Endothelial cell of umbilical vein (primary cell): ENCODE measurements at regions of chr3 and their contacts with region 1.

Region 1: GRCh38 chr3:79521238-79521848 is 246.5 kb downstream of the ROBO1 start:
- DNase-seq: peak; percentile 79
- H3K4me3 ChIP-seq: no peak overlapping the region
- H3K27ac ChIP-seq: no peak overlapping the region
- H3K4me1 ChIP-seq: peaks cover 6% of the 10 kb centered on the region
- H3K27me3 ChIP-seq: no peaks in the 10 kb centered on the region
- CTCF ChIP-seq: peak; percentile 17 to 30
- POLR2A ChIP-seq: no peak

Region 2: GRCh38 chr3:79598594-79598993 is 77.3 kb after region 1 on chr3:
- CTCF ChIA-PET with region 1: no interaction called
- POLR2A ChIA-PET with region 1: no interaction called
- dilution Hi-C with region 1: no loop called
- intact Hi-C with region 1: no loop called
- DNase-seq: peak; percentile 37
- H3K4me3 ChIP-seq: no peak overlapping the region
- H3K27ac ChIP-seq: no peak overlapping the region
- H3K4me1 ChIP-seq: no peaks in the 10 kb centered on the region
- H3K27me3 ChIP-seq: no peaks in the 10 kb centered on the region
- CTCF ChIP-seq: no peak
- POLR2A ChIP-seq: no peak

Region 3: DNA sequence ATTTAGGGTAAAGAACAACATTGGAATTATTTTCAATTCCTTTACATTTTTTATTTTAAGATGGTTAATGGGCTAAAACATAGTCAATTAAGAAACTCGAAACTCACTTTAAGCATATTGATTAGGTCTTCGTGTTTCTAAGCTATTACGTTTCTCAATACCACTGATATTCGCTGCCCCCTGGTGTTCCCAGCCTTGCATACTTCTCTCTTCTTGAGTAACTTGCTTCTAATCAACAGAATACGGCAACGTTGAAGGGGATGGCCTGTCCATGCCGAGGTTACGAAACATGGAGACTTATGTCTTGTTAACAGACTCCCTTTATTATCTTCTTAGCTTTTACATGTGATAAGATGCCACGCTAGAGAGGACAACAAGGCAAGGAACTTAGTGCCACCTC is 202.9 kb after region 1 on chr3:
- CTCF ChIA-PET with region 1: no interaction called
- POLR2A ChIA-PET with region 1: no interaction called
- dilution Hi-C with region 1: no loop called
- intact Hi-C with region 1: loop called (anchors 5 kb)
- DNase-seq: no peak
- H3K4me3 ChIP-seq: no peak overlapping the region
- H3K27ac ChIP-seq: no peak overlapping the region
- H3K4me1 ChIP-seq: no peaks in the 10 kb centered on the region
- H3K27me3 ChIP-seq: no peaks in the 10 kb centered on the region
- CTCF ChIP-seq: no peak
- POLR2A ChIP-seq: no peak

Region 4: DNA sequence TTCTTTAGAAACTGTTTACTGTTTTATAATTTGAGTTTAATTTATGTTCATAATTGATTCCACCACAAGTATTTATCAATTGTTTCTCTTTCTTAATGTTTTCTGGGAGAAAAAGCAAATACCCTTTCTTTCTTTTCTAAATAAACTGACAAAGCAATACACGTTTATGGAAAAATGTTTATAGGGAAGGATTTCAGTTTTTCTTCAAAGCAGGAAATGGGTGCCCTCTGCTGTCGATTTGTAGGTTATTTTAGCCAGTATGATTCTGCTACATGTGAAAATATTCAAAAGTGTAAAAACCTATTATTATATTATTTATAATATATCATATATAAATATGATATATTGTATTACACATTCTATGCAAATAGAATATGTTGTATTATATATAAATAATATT is 1167.5 kb after region 1 on chr3:
- CTCF ChIA-PET with region 1: interaction called, 80 read pairs
- POLR2A ChIA-PET with region 1: no interaction called
- dilution Hi-C with region 1: no loop called
- intact Hi-C with region 1: loop called (anchors 1 kb)
- DNase-seq: peak; percentile 65
- H3K4me3 ChIP-seq: no peak overlapping the region
- H3K27ac ChIP-seq: no peak overlapping the region
- H3K4me1 ChIP-seq: no peaks in the 10 kb centered on the region
- H3K27me3 ChIP-seq: no peaks in the 10 kb centered on the region
- CTCF ChIP-seq: peak; percentile 8 to 30
- POLR2A ChIP-seq: no peak

Region 5: DNA sequence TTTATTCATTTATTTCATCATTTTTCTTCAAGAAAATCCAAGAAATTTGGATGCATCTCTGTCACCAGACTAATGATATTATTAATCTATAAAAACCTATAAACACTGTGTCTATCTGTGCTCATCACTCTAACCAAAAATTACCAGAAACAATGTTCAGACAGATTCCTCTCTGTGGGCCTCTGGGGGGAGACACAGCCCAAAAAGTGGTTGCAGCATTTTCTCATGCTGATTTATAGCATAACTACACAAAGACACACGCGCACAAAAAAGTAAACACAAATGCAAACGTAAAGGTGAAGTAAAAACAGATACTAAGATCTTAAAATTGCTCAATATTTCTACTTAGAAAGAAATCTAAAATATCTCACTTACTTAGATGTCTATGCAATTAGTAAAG is 1264.1 kb after region 1 on chr3:
- CTCF ChIA-PET with region 1: interaction called, 4 read pairs
- POLR2A ChIA-PET with region 1: no interaction called
- dilution Hi-C with region 1: no loop called
- intact Hi-C with region 1: loop called (anchors 5 kb)
- DNase-seq: peak; percentile 57
- H3K4me3 ChIP-seq: no peak overlapping the region
- H3K27ac ChIP-seq: no peak overlapping the region
- H3K4me1 ChIP-seq: no peaks in the 10 kb centered on the region
- H3K27me3 ChIP-seq: no peaks in the 10 kb centered on the region
- CTCF ChIP-seq: peak; percentile 31 to 32
- POLR2A ChIP-seq: no peak